Astrocyte of the cerebellum (primary cell): ENCODE measurements at regions of chr6 and their contacts with region 1.

Region 1: GRCh38 chr6:76342611-76343160 is 270.2 kb upstream of the IMPG1 start:
- DNase-seq: no peak
- H3K4me3 ChIP-seq: no peak overlapping the region
- CTCF ChIP-seq: no peak

Region 2: DNA sequence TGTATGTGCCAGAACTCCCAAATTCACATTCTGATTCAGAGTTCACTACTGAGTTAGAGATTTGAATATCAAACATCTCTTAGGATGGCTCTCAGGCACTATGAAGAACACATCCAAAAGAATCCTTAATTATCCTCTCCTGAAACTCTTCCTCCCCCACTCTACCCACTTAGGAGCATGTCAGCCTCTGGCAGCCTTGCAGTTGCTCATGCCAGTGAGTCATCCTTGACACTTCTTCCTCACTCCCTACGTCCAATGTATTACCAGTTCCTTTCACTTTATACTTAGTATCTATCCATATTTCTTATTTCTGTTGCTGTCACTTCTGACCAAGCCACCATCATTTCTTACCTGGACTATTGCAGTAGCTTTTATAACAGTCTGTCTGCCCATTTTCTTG is 78.2 kb before region 1 on chr6:
- in situ Hi-C with region 1: loop called (anchors 5 kb)
- DNase-seq: no peak
- H3K4me3 ChIP-seq: no peak overlapping the region
- CTCF ChIP-seq: no peak